CD8-positive, alpha-beta T cell (primary cell): ENCODE measurements at regions of chr22 and their contacts with region 1.

Region 1: DNA sequence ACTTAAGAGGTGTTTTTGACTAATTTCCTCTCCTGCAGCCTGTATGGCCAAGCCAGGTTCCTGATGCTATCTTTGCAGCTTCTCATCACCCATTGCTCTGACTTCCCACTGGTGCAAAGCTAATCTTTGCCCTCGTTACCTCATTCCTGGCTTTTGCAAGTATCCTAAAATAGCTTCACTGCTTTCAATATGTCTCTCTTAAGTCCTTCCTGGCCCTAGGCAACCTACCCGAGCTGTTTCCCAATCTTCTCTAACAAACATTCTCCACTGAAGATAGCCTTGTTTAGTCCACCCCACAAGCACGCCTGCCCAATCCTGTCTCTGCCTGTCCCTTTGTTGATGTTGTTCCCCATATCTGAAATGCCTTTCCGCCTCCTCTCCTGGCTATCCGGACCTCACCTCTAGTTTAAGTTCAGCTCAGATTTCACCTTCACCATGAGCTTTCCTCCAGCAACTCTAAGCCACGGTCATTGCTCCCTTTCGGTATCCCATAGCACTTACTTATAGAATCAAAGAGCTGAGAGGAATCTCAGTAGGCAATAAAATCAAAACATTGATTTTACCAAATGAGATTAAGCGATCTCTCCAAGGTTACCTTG is 30.1 kb upstream of the CECR2 start:
- DNase-seq: no peak
- ATAC-seq: no peak
- H3K4me3 ChIP-seq: no peak overlapping the region
- H3K4me3 Mint-ChIP-seq: no peak overlapping the region
- H3K27ac ChIP-seq: no peak overlapping the region
- H3K27ac Mint-ChIP-seq: no peak overlapping the region
- H3K4me1 ChIP-seq: no peaks in the 10 kb centered on the region
- H3K4me1 Mint-ChIP-seq: no peaks in the 10 kb centered on the region
- H3K27me3 ChIP-seq: no peaks in the 10 kb centered on the region
- H3K27me3 Mint-ChIP-seq: peaks cover 5% of the 10 kb centered on the region
- CTCF ChIP-seq: no peak

Region 2: DNA sequence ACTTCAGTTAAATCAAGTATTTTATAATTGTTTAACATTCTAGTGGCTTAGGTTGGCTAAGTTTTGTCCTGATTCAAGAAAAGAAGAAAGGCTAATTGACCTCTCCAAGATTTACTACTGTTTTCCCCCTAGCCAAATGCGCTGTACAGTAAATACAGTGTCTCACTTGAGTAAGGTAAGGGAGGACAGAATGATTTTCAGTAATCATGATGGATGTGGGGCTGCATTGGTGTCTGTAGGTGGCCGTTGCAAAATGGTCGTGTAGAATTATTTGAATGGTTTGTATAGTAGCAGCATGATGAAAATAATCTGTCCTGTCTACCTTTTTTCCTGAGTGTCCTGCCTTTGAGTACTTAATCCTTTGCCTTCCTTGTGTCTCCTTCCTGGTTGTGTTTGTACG is 34.7 kb after region 1 on chr22:
- CTCF ChIA-PET with region 1: no interaction called
- POLR2A ChIA-PET with region 1: no interaction called
- intact Hi-C with region 1: loop called in 1 of 2 experiments (anchors 1 kb)
- DNase-seq: no peak
- ATAC-seq: no peak
- H3K4me3 ChIP-seq: no peak overlapping the region
- H3K4me3 Mint-ChIP-seq: no peak overlapping the region
- H3K27ac ChIP-seq: no peak overlapping the region
- H3K27ac Mint-ChIP-seq: no peak overlapping the region
- H3K4me1 ChIP-seq: peaks cover 14% of the 10 kb centered on the region
- H3K4me1 Mint-ChIP-seq: peaks cover 9% of the 10 kb centered on the region
- H3K27me3 ChIP-seq: peaks cover 14 to 20% of the 10 kb centered on the region in 2 experiments
- H3K27me3 Mint-ChIP-seq: peaks cover 45% of the 10 kb centered on the region
- CTCF ChIP-seq: no peak

Region 3: GRCh38 chr22:17471886-17472535 is 132.8 kb after region 1 on chr22:
- CTCF ChIA-PET with region 1: no interaction called
- POLR2A ChIA-PET with region 1: no interaction called
- intact Hi-C with region 1: no loop called
- DNase-seq: no peak
- ATAC-seq: no peak
- H3K4me3 ChIP-seq: no peak overlapping the region
- H3K4me3 Mint-ChIP-seq: no peak overlapping the region
- H3K27ac ChIP-seq: no peak overlapping the region
- H3K27ac Mint-ChIP-seq: no peak overlapping the region
- H3K4me1 ChIP-seq: no peaks in the 10 kb centered on the region
- H3K4me1 Mint-ChIP-seq: no peaks in the 10 kb centered on the region
- H3K27me3 ChIP-seq: no peaks in the 10 kb centered on the region
- H3K27me3 Mint-ChIP-seq: peaks cover 21% of the 10 kb centered on the region
- CTCF ChIP-seq: no peak

Region 4: GRCh38 chr22:17638432-17639246 is 299.4 kb after region 1 on chr22 and contains the start of gene BCL2L13:
- CTCF ChIA-PET with region 1: no interaction called
- POLR2A ChIA-PET with region 1: no interaction called
- intact Hi-C with region 1: no loop called
- DNase-seq: peak; percentile 73 to 93 (median 89)
- ATAC-seq: peak; percentile 92
- H3K4me3 ChIP-seq: peak within 1 kb of the TSS; percentile 67 to 90
- H3K4me3 Mint-ChIP-seq: peak within 1 kb of the TSS; percentile 92
- H3K27ac ChIP-seq: peak within 1 kb of the TSS; percentile 98 to 99
- H3K27ac Mint-ChIP-seq: peak within 1 kb of the TSS; percentile 98
- H3K4me1 ChIP-seq: peaks cover 21% of the 10 kb centered on the region
- H3K4me1 Mint-ChIP-seq: peaks cover 29% of the 10 kb centered on the region
- H3K27me3 ChIP-seq: no peaks in the 10 kb centered on the region
- H3K27me3 Mint-ChIP-seq: no peaks in the 10 kb centered on the region
- CTCF ChIP-seq: no peak
- total RNA-seq, gene BCL2L13: 7.8 to 9.5 TPM